Common myeloid progenitor, CD34-positive (primary cell): ENCODE measurements at regions of chr14 and their contacts with region 1.

Region 1: DNA sequence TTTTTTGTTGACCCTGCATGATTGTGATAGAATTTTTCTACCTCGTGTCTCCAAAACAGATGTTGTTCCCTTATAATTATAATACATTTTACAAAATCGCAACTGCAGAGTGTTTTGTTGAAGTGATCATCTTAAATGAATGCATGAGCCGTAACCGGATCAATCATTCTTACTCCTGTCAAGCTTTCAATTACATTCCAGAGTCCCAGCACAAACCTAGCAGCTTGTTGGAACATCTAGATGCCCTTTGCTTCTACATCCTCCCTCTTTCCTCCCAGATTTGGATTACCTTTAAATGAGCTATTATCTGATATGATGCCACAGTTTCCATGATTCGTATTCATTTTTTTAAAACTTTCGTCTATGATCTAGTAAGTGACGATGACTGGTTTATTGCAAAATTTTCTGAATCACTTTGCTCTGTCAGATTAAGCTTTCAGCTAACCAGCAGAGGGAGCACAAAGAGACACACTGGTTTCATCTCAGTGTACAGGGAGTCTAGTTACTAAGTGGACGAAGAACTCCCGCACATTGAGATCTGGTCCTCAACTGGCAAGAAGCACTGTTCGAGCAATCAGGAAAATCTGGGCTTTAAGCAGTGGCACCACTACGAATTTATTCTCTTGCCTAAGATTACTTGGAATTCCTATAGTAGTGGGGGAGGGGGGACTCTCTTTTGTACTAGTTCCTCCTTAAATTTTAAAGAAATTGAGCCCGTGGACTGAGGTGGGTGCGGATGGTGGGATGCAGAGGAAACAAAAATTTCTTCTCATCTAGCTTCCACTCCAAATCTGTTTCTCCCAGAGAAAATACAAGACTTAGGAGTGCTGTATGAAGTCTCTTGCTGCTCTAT is 40.9 kb downstream of the TSHR start:
- DNase-seq: peak; percentile 69 to 84 (median 79)
- H3K4me3 ChIP-seq: peak overlapping the region in 2 of 7 experiments; percentile 46 to 52
- H3K27ac ChIP-seq: no peak overlapping the region
- H3K4me1 ChIP-seq: peaks cover 0 to 5% (median 1%) of the 10 kb centered on the region in 4 experiments
- H3K27me3 ChIP-seq: peaks cover 0 to 5% (median 2%) of the 10 kb centered on the region in 5 experiments

Region 2: GRCh38 chr14:80965037-80965436 is 31.2 kb before region 1 on chr14:
- CTCF ChIA-PET with region 1: no interaction called
- POLR2A ChIA-PET with region 1: no interaction called
- DNase-seq: no peak
- H3K4me3 ChIP-seq: no peak overlapping the region
- H3K27ac ChIP-seq: no peak overlapping the region
- H3K4me1 ChIP-seq: no peaks in the 10 kb centered on the region
- H3K27me3 ChIP-seq: peaks cover 0 to 7% (median 0%) of the 10 kb centered on the region in 5 experiments

Region 3: DNA sequence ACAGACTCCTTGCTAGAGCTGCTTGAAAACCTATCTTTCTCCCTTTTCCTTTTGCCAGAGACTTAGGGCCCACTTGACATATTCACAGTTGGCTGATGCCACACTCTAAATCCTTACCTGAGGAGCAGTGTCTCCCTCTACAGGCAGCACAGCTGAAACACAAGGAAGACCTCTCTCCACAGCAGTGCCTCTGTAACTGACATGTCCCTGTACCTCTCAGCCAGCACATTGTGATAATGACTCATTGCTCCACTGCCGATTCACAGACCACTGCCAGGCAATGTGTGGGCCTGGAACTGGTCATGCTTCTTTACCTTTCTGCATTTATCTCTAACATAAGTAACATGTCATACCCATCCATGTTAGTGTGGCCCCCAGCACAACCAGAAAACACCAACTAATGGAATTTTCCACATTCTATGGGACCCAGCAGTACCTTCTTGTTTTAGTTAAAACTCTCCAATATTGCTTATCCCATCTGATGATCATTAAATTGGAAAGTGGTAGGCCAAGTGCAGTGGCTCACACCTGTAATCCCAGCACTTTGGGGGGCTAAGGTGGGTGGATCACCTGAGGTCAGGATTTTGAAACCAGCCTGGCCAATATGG is 168.0 kb after region 1 on chr14:
- CTCF ChIA-PET with region 1: interaction called, 34 read pairs
- POLR2A ChIA-PET with region 1: no interaction called
- DNase-seq: peak; percentile 34 to 73 (median 66)
- H3K4me3 ChIP-seq: no peak overlapping the region
- H3K27ac ChIP-seq: no peak overlapping the region
- H3K4me1 ChIP-seq: peaks cover 2 to 20% (median 5%) of the 10 kb centered on the region in 4 experiments
- H3K27me3 ChIP-seq: no peaks in the 10 kb centered on the region

Region 4: DNA sequence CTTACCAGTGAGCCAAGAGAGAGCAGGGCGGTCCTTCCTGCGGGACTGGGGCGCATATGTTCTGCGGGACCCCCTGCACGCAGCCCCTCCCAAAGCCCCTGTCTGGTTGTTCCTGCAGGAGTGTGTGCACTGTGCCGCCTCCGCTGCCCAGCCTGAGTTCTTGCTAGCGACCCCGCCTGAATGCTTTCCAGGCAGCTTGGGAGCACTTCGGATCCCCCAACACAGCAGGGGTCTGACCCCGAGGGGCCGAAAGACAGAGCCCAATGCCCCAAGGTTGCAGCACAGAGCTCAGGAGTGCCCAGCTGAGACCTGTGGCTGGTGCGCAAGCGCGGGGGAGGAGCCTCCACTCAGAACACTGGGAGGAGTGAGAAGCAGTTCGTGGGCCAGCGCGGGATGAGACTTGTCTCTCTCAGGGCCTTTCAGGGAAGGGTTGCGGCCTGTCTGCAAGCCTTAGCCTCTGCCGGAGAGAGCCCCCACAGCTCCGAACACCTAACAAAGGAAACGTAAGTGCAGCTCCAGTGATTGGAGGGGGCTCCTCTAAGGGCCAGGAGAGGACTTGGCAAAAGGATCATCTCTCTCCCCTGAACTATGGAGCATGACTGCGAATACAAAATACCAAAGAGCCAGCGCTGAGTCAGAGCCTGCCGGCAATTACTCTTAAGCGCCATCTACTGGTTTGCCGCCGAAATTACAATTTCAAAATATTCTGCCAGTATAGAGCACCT is 174.0 kb after region 1 on chr14:
- CTCF ChIA-PET with region 1: interaction called, 34 read pairs
- POLR2A ChIA-PET with region 1: interaction called, 3 read pairs
- DNase-seq: peak; percentile 86 to 93 (median 91)
- H3K4me3 ChIP-seq: peak overlapping the region; percentile 16 to 90 (median 78)
- H3K27ac ChIP-seq: peak overlapping the region; percentile 42 to 78
- H3K4me1 ChIP-seq: peaks cover 6 to 18% (median 10%) of the 10 kb centered on the region in 4 experiments
- H3K27me3 ChIP-seq: no peaks in the 10 kb centered on the region

Region 5: DNA sequence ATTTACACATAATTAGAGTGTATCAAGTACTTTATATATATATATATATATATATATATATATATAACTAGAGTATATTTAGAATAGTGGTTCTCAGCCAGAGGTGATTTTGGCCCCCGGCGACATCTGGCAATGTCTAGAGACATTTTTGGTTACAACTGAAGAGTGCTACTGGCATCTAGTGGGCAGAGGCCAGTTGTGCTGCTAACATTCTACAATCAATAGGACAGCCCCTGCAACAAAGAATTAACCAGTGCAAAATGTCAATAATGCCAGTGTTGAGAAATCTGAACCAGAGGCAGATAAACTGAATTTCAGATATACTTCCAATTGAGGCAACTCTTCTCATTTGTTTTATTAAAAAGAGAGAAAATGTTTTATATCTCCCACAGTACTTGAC is 215.6 kb after region 1 on chr14:
- CTCF ChIA-PET with region 1: interaction called, 48 read pairs
- POLR2A ChIA-PET with region 1: no interaction called
- DNase-seq: peak; percentile 69 to 85 (median 81)
- H3K4me3 ChIP-seq: no peak overlapping the region
- H3K27ac ChIP-seq: no peak overlapping the region
- H3K4me1 ChIP-seq: peaks cover 3 to 8% (median 5%) of the 10 kb centered on the region in 4 experiments
- H3K27me3 ChIP-seq: no peaks in the 10 kb centered on the region